Dendritic cell treated with granulocyte-macrophage colony-stimulating factor and Interleukin-4, amounts not matched to agents 40 ng/mL and 50 ng/mL, for 4 days (primary cell): ENCODE measurements at regions of chr18 and their contacts with region 1.

Region 1: DNA sequence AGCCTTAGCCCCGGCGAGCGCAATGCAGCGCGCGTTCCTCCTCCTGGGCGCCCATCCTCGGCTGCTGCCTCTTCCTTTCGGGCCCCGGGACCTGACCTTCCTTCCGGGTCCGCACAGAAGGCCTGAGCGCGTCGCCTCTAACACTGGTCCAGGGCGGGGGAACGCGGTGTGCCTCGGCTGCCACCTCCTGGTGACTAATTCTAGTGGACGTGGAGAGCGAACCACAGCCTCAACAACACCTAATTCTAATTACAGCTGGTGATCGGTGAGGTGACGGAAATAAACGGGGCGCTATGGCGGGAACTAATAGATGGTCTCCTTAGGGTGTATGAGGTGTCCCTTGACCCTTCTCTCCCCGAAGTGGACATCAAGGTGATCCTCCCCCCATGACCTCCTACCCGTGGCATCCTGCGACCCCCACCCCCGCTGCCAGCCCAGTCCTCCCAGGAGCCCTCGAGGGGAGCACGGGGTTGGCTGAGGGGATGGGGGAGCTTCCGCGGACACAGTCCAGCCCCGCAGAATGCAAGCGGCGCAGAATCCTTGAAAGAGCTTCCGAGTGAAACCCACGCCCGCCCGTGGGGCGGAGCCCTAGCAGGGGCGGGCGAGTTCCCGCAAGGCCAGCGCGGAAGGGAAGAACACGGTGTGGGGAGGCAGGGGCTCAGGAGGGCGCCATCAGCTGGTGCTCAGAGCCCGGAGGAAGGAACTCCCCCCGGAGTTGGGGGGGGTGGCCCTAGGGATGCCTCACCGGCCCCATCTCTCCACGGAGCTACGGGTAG is 12.8 kb upstream of the HMSD start:
- H3K4me3 Mint-ChIP-seq: no peak overlapping the region
- H3K27ac Mint-ChIP-seq: no peak overlapping the region
- H3K4me1 Mint-ChIP-seq: peaks cover 6% of the 10 kb centered on the region
- H3K27me3 Mint-ChIP-seq: no peaks in the 10 kb centered on the region

Region 2: GRCh38 chr18:63207143-63207790 is 729.1 kb before region 1 on chr18:
- intact Hi-C with region 1: no loop called
- H3K4me3 Mint-ChIP-seq: no peak overlapping the region
- H3K27ac Mint-ChIP-seq: peak overlapping the region; percentile 12
- H3K4me1 Mint-ChIP-seq: peaks cover 38% of the 10 kb centered on the region
- H3K27me3 Mint-ChIP-seq: peaks cover 8% of the 10 kb centered on the region

Region 3: GRCh38 chr18:63578357-63578958 is 357.9 kb before region 1 on chr18:
- intact Hi-C with region 1: loop called (anchors 10 kb)
- H3K4me3 Mint-ChIP-seq: no peak overlapping the region
- H3K27ac Mint-ChIP-seq: no peak overlapping the region
- H3K4me1 Mint-ChIP-seq: peaks cover 28% of the 10 kb centered on the region
- H3K27me3 Mint-ChIP-seq: no peaks in the 10 kb centered on the region

Region 4: DNA sequence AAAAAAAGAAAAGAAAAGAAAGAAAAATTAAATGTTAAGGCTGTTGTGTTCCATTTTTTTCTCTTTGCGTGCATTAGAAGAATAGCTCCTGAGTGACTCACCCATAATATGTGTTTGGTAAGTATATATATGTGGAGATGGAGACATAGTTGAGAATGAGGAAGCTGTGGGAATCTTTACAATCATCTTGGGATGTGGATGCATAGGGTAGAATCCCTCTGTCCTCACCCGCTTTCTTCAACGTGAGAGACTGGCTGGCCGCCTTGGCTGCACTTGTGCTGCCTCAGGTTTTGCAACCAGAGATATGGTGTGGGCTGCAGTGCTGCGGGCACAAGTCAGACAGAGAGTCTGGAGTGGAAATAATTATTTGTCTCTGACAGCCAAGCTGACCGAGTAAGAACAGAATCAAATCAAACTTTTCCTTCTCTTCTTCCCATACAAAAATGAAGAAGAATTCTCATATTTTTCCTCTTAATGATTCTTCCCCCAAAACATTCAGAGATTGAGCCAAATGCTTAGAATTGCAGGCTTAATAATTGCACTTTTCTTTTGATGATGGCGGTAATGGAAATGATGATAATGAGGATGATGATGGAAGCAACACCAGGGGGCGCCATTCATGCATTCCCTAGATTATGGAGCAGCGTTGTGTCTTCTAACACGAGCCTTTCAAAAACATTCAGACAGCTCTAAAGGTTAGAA is 112.7 kb before region 1 on chr18:
- intact Hi-C with region 1: loop called (anchors 1 kb)
- H3K4me3 Mint-ChIP-seq: no peak overlapping the region
- H3K27ac Mint-ChIP-seq: no peak overlapping the region
- H3K4me1 Mint-ChIP-seq: no peaks in the 10 kb centered on the region
- H3K27me3 Mint-ChIP-seq: no peaks in the 10 kb centered on the region

Region 5: GRCh38 chr18:63848159-63848558 is 88.2 kb before region 1 on chr18:
- intact Hi-C with region 1: loop called (anchors 2 kb)
- H3K4me3 Mint-ChIP-seq: no peak overlapping the region
- H3K27ac Mint-ChIP-seq: no peak overlapping the region
- H3K4me1 Mint-ChIP-seq: no peaks in the 10 kb centered on the region
- H3K27me3 Mint-ChIP-seq: no peaks in the 10 kb centered on the region

Region 6: DNA sequence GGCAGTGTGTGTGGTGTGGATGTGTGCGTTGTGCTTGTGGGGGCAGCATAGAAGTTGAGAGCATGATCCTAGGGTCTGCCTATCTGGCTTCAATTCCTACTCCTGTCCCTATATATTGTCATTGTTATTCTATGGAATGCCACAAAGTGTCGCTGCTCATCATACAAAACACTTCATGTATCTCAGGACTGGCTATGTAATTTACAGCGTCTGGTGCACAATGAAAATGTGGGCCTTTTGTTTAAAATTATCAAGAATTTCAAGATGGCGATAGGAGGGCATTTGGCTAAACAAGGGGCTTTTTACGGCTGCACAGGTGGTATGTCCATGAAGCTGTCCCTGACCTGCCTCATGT is 45.4 kb before region 1 on chr18:
- intact Hi-C with region 1: loop called (anchors 2 kb)
- H3K4me3 Mint-ChIP-seq: no peak overlapping the region
- H3K27ac Mint-ChIP-seq: peak overlapping the region; percentile 62
- H3K4me1 Mint-ChIP-seq: peaks cover 80% of the 10 kb centered on the region
- H3K27me3 Mint-ChIP-seq: no peaks in the 10 kb centered on the region